ENCODE measurements at regions of chr1 and their contacts with region 1.

Region 1: GRCh38 chr1:170714938-170715337 is 51.0 kb downstream of the PRRX1 start:
- DNase-seq: no peak
- H3K4me3 ChIP-seq: no peak overlapping the region
- H3K27ac ChIP-seq: no peak overlapping the region
- H3K4me1 ChIP-seq: peaks cover 14% of the 10 kb centered on the region
- H3K27me3 ChIP-seq: no peaks in the 10 kb centered on the region
- CTCF ChIP-seq: no peak

Region 2: DNA sequence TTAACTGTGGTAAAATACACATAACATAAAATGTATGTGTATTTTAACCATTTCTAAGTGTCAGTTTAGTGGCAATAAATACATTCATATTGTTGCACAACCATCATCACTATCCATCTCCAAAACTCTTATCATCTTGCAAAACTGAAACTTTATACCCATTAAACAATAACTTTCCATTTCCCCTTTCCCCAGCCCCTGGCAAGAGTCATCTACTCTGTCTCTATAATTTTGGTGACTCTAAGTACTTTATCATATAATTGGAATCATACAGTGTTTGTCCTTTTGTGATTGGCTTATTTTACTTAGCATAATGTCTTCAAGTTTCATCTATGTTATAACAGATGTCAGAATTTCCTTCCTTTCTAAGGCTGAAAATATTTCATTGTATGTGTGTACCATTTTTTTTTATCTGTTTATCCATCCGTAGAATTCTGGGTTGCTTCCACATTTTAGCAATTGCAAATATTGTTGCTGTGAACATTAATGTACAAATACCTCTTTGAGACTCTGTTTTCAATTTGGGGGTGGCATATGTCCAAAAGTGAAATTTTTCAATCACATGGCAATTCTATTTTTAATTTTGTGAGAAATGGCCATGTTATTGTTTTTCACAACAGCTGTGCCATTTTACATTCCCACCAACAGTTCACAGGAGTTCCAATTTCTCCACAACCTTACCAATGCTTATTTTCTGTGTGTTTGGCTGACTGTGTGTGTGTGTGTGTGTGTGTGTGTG is 336.9 kb before region 1 on chr1:
- intact Hi-C with region 1: no loop called
- DNase-seq: no peak
- H3K4me3 ChIP-seq: no peak overlapping the region
- H3K27ac ChIP-seq: no peak overlapping the region
- H3K4me1 ChIP-seq: peaks cover 3% of the 10 kb centered on the region
- H3K27me3 ChIP-seq: no peaks in the 10 kb centered on the region
- CTCF ChIP-seq: no peak

Region 3: GRCh38 chr1:170700842-170701615 is 13.9 kb before region 1 on chr1:
- intact Hi-C with region 1: loop called (anchors 1 kb)
- DNase-seq: no peak
- H3K4me3 ChIP-seq: no peak overlapping the region
- H3K27ac ChIP-seq: peak overlapping the region; percentile 83
- H3K4me1 ChIP-seq: peaks cover 56% of the 10 kb centered on the region
- H3K27me3 ChIP-seq: no peaks in the 10 kb centered on the region
- CTCF ChIP-seq: no peak

Region 4: DNA sequence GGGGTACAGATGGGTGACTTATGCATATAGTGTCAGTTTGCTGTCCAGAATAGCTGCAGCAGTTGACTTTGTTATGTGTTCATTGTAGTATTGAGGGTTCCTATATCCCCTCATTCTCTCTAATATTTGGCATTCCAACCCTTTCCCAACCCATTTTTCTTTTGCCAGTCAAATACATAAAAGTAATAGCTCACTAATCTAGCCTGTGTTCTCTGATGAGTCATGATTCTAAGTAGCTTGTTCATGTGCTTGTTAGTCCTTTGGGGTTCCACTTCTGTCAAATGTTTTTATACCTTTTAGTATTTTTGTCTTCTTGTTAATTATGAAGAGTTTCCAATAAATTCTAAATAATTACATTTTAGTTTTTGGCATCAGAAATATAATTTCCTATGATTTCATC is 121.2 kb after region 1 on chr1:
- intact Hi-C with region 1: no loop called
- DNase-seq: no peak
- H3K4me3 ChIP-seq: no peak overlapping the region
- H3K27ac ChIP-seq: no peak overlapping the region
- H3K4me1 ChIP-seq: no peaks in the 10 kb centered on the region
- H3K27me3 ChIP-seq: no peaks in the 10 kb centered on the region
- CTCF ChIP-seq: no peak

Measured in left ventricle myocardium inferior (tissue), 1 donor.